GM23248 (cell line): ENCODE measurements at regions of chr11 and their contacts with region 1.

Region 1: DNA sequence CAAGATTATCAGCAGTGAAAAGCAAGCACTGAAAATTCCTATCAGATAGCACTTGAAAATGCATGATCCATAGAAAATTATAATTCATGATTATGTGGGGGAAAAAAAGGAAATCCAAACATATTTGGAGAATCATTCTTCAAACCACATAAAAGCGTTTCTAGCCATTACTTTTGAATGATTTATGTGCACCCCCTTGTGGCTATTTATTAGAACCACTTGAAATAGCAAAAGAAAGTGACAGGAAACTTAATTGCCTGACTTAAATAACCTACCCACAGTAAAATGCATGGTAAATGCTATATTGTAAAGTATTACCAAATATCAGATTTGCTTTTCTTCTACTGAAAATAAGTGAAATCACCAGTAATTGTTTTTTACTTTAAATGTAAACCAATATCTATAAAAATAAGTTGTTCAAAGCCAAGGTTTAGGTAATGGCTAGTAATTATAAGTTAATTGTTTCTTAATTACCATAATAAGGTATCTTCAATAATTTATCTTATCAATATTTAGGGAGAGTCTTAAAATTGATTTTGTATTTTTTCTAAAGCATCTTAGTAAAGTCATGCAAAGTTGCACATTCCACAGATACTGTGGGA is 168.5 kb downstream of the ARHGAP42 start:
- DNase-seq: peak; percentile 68
- H3K4me3 ChIP-seq: no peak overlapping the region
- H3K27ac ChIP-seq: no peak overlapping the region
- H3K4me1 ChIP-seq: no peaks in the 10 kb centered on the region
- H3K27me3 ChIP-seq: no peaks in the 10 kb centered on the region

Region 2: GRCh38 chr11:99325807-99326206 is 1529.8 kb before region 1 on chr11:
- in situ Hi-C with region 1: loop called (anchors 25 kb)
- DNase-seq: peak; percentile 91
- H3K4me3 ChIP-seq: peak overlapping the region; percentile 60
- H3K27ac ChIP-seq: peak overlapping the region; percentile 75
- H3K4me1 ChIP-seq: peaks cover 15% of the 10 kb centered on the region
- H3K27me3 ChIP-seq: no peaks in the 10 kb centered on the region

Region 3: DNA sequence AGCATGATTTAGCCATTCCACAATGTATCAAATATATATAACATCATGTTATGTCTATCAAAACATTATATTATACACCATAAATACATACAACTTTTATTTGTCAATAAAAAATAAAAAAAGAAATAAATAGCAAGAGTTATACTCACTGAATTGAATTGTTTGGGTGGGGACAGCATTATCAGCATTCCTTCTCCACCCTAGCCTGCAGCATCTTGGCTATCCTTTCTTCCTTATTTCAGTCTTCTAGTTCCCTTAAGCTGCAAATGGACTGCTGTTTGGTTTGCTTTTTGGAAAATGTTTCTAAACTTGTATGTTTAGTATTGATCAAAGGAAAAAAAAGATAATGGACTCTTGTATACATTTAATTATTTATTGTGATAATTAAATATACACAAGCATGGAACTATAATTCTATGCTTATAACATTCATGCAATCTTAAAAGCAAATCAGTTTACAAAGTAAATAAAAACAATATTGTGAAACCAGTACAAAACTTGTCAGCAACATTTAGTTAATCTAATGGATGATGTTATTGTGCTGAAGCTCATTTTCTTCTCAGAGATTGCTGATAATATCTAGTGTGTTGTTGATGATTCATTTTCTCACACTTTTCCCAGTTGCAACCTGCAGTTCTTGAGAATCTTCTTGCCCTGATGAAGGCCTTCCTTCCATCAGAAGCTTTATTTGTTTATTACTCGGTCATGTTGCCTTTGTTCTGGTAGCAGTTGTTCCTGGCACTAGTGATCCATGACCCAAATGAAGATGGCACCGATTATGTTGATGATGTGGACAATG is 163.5 kb before region 1 on chr11:
- in situ Hi-C with region 1: loop called (anchors 10 kb)
- DNase-seq: peak; percentile 12
- H3K4me3 ChIP-seq: no peak overlapping the region
- H3K27ac ChIP-seq: no peak overlapping the region
- H3K4me1 ChIP-seq: peaks cover 6% of the 10 kb centered on the region; the same call in 1 of the 2 replicates
- H3K27me3 ChIP-seq: no peaks in the 10 kb centered on the region